GM12878 (cell line): ENCODE measurements at regions of chr1 and their contacts with region 1.

Region 1: DNA sequence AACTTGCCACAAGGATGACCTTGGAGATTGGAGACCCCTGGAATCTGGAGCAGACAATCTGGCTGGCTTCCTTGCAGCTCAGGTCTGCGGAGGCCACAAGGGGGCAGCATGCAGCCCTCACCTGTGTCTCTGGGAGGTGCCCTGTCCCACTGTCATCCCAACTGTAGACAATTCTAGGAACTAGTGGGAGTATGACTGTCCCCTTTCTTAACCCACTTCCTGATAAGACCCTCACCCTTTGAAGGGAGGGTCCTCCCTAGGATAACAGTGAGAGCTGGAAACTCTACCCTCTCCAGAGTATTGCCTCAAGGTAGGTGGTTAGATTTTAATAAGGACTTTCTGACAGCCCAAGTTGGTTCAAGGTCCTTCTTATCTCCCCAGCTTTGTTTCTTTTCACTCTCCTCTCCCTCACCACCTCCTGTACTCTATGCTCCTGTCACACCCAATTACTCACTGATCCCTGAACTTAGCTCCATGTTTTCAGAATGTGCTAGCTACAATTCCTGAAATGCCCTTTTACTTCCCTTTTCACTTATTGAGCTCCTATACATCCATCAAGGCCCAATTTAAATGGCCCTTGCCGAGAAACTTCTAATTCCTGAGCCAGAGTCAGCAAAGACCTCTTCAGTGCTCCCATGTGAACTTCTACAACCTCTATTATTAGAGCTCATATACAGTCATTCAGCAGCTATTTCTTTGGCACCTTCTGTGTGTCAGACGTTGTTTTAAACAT is 9.2 kb upstream of the KCNQ4 start:
- DNase-seq: no peak
- ATAC-seq: peak; percentile 88
- H3K4me3 ChIP-seq: no peak overlapping the region
- H3K27ac ChIP-seq: no peak overlapping the region
- H3K4me1 ChIP-seq: no peaks in the 10 kb centered on the region
- H3K27me3 ChIP-seq: no peaks in the 10 kb centered on the region
- CTCF ChIP-seq: peak; percentile 79 to 91 (median 86)
- EP300 ChIP-seq: no peak
- POLR2A ChIP-seq: no peak
- RAD21 ChIP-seq: peak; percentile 65

Region 2: GRCh38 chr1:40449684-40450494 is 324.5 kb before region 1 on chr1 and contains the start of gene ZFP69B:
- CTCF ChIA-PET with region 1: no interaction called
- POLR2A ChIA-PET with region 1: no interaction called
- RAD21 ChIA-PET with region 1: no interaction called
- SMC1A ChIA-PET with region 1: no interaction called
- in situ Hi-C with region 1: no loop called
- intact Hi-C with region 1: no loop called
- DNase-seq: peak; percentile 69
- ATAC-seq: peak; percentile 91
- H3K4me3 ChIP-seq: peak within 1 kb of the TSS; percentile 63
- H3K27ac ChIP-seq: peak within 1 kb of the TSS; percentile 83
- H3K4me1 ChIP-seq: no peaks in the 10 kb centered on the region
- H3K27me3 ChIP-seq: no peaks in the 10 kb centered on the region
- CTCF ChIP-seq: peak in 2 of 3 experiments; percentile 11 to 17; a peak in 2 of 6 replicates
- EP300 ChIP-seq: no peak
- POLR2A ChIP-seq: peak; percentile 91
- RAD21 ChIP-seq: no peak
- polyA plus RNA-seq, gene ZFP69B: 1.3 to 1.4 TPM

Region 3: GRCh38 chr1:40691538-40692428 is 82.6 kb before region 1 on chr1 and contains the start of gene NFYC:
- CTCF ChIA-PET with region 1: interaction called, 54 read pairs
- POLR2A ChIA-PET with region 1: no interaction called
- RAD21 ChIA-PET with region 1: interaction called, 10 read pairs
- SMC1A ChIA-PET with region 1: interaction called, 33 read pairs
- in situ Hi-C with region 1: no loop called
- intact Hi-C with region 1: no loop called
- DNase-seq: peak; percentile 94
- ATAC-seq: peak; percentile 94
- H3K4me3 ChIP-seq: peak within 1 kb of the TSS; percentile 95
- H3K27ac ChIP-seq: peak within 1 kb of the TSS; percentile 98
- H3K4me1 ChIP-seq: peaks cover 32% of the 10 kb centered on the region
- H3K27me3 ChIP-seq: no peaks in the 10 kb centered on the region
- CTCF ChIP-seq: peak in 1 of 3 experiments; percentile 10; a peak in 1 of 6 replicates
- EP300 ChIP-seq: peak in 1 of 2 experiments; percentile 45; a peak in 2 of 4 replicates
- POLR2A ChIP-seq: peak; percentile 99
- RAD21 ChIP-seq: no peak
- polyA plus RNA-seq, gene NFYC: 4.3 to 6.9 TPM

Region 4: DNA sequence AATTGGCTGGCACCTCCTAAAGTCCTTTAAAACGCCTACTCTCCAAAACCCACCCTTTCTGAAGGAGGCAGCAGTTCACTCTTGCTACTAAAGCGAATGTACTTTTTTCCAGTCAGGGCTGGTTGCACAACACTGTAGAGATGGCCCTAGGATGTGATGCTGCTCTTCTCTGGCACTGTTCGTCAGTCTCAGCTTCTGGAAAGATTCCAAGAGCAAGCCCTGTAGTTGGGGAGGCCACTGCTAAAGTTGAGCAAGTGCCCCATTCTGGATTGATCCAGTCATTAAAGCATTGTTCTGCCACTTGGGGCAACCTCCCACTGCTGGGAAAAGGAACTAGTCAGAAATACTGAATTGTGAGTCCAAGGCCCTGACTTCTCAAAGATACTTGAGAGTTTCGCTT is 19.4 kb before region 1 on chr1:
- CTCF ChIA-PET with region 1: interaction called, 84 read pairs
- POLR2A ChIA-PET with region 1: no interaction called
- RAD21 ChIA-PET with region 1: interaction called, 11 read pairs
- SMC1A ChIA-PET with region 1: interaction called, 22 read pairs
- in situ Hi-C with region 1: no loop called
- intact Hi-C with region 1: no loop called
- DNase-seq: no peak
- ATAC-seq: no peak
- H3K4me3 ChIP-seq: no peak overlapping the region
- H3K27ac ChIP-seq: no peak overlapping the region
- H3K4me1 ChIP-seq: peaks cover 24% of the 10 kb centered on the region
- H3K27me3 ChIP-seq: no peaks in the 10 kb centered on the region
- CTCF ChIP-seq: no peak
- EP300 ChIP-seq: no peak
- POLR2A ChIP-seq: no peak
- RAD21 ChIP-seq: no peak

Region 5: GRCh38 chr1:40802078-40802741 is 27.8 kb after region 1 on chr1:
- CTCF ChIA-PET with region 1: interaction called, 30 read pairs
- POLR2A ChIA-PET with region 1: no interaction called
- RAD21 ChIA-PET with region 1: interaction called, 5 read pairs
- SMC1A ChIA-PET with region 1: interaction called, 7 read pairs
- in situ Hi-C with region 1: no loop called
- intact Hi-C with region 1: no loop called
- DNase-seq: no peak
- ATAC-seq: peak; percentile 95
- H3K4me3 ChIP-seq: peak overlapping the region; percentile 61
- H3K27ac ChIP-seq: no peak overlapping the region
- H3K4me1 ChIP-seq: peaks cover 30% of the 10 kb centered on the region
- H3K27me3 ChIP-seq: no peaks in the 10 kb centered on the region
- CTCF ChIP-seq: no peak
- EP300 ChIP-seq: no peak
- POLR2A ChIP-seq: no peak
- RAD21 ChIP-seq: no peak

Region 6: DNA sequence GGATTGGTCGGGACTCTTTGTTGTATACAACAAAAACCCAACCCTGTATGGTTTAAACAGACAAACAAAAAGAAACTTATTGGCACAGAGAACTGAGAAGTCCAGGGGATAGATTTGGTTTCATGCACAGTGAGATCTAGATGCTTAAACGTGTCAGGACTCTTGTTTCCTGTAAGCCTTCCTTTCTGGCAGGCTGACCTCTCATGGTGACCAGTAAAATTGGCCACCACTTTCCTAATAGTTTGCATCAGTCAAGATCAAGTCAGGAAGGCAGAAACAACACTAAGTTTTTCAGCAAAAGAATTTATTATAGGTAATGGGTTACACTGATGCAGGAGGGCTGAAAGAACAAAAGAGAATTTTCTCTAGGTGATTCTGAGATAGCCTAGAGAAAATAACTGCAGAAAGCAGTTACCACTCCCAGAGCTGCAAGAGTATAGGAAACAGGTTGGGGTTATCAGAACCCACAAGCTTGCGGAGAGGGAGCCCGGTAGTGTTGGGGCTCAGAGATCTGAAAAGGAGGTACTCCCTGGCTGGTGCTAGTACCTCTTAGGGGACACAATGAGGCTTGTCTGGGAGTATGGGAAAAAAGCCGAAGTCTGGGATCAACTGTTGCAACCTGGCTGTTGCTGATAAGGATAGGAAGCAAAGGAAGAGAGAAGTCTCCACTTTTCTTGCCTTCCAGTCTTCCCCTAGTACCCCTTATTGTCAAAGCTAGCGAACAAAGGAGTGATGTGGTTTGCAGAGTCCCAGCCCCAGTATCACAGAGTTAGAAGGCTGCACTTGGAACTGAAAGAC is 66.3 kb after region 1 on chr1:
- CTCF ChIA-PET with region 1: interaction called, 254 read pairs
- POLR2A ChIA-PET with region 1: no interaction called
- RAD21 ChIA-PET with region 1: interaction called, 15 read pairs
- SMC1A ChIA-PET with region 1: interaction called, 15 read pairs
- in situ Hi-C with region 1: no loop called
- intact Hi-C with region 1: no loop called
- DNase-seq: no peak
- ATAC-seq: peak; percentile 42; the same call in 2 of the 3 replicates
- H3K4me3 ChIP-seq: no peak overlapping the region
- H3K27ac ChIP-seq: no peak overlapping the region
- H3K4me1 ChIP-seq: peaks cover 7% of the 10 kb centered on the region; the same call in 1 of the 2 replicates
- H3K27me3 ChIP-seq: no peaks in the 10 kb centered on the region
- CTCF ChIP-seq: peak in 1 of 3 experiments; percentile 12; a peak in 1 of 6 replicates
- EP300 ChIP-seq: no peak
- POLR2A ChIP-seq: no peak
- RAD21 ChIP-seq: no peak

Region 7: GRCh38 chr1:40951943-40952743 is 177.7 kb after region 1 on chr1:
- CTCF ChIA-PET with region 1: interaction called, 128 read pairs
- POLR2A ChIA-PET with region 1: no interaction called
- RAD21 ChIA-PET with region 1: interaction called, 53 read pairs
- SMC1A ChIA-PET with region 1: interaction called, 40 read pairs
- in situ Hi-C with region 1: no loop called
- intact Hi-C with region 1: loop called (anchors 5 kb)
- DNase-seq: no peak
- ATAC-seq: peak; percentile 88
- H3K4me3 ChIP-seq: no peak overlapping the region
- H3K27ac ChIP-seq: no peak overlapping the region
- H3K4me1 ChIP-seq: no peaks in the 10 kb centered on the region
- H3K27me3 ChIP-seq: no peaks in the 10 kb centered on the region
- CTCF ChIP-seq: peak; percentile 91 to 94 (median 92)
- EP300 ChIP-seq: no peak
- POLR2A ChIP-seq: no peak
- RAD21 ChIP-seq: peak; percentile 87

Region 8: DNA sequence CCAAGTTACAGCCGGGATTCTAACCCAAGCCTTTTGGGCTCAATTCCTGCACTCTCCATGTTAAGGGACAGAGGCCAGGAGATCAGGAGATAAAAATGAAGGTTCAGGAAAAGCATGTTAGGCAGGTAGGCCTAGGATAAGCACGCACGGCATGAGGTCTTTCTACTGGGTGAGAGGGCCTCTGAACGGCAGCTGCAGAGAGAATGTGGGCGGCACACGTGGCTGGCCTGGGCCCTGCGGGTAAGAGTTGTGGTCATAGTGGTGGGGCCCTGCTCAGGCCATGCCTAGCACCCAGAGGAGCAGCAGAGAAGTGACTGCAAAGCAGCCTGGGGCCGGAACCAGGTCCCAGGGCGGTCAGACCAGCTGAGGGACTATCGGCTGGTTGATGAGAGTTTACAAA is 579.3 kb after region 1 on chr1:
- CTCF ChIA-PET with region 1: no interaction called
- POLR2A ChIA-PET with region 1: no interaction called
- RAD21 ChIA-PET with region 1: no interaction called
- SMC1A ChIA-PET with region 1: no interaction called
- in situ Hi-C with region 1: no loop called
- intact Hi-C with region 1: no loop called
- DNase-seq: peak; percentile 59
- ATAC-seq: peak; percentile 99
- H3K4me3 ChIP-seq: no peak overlapping the region
- H3K27ac ChIP-seq: no peak overlapping the region
- H3K4me1 ChIP-seq: peaks cover 10% of the 10 kb centered on the region; the same call in 1 of the 2 replicates
- H3K27me3 ChIP-seq: no peaks in the 10 kb centered on the region
- CTCF ChIP-seq: no peak
- EP300 ChIP-seq: peak; percentile 69 to 77; a peak in 2 of 4 replicates
- POLR2A ChIP-seq: no peak
- RAD21 ChIP-seq: no peak